ENCODE measurements at regions of chr14 and their contacts with region 1.

Region 1: GRCh38 chr14:80987235-80988032 is 32.0 kb downstream of the TSHR start:
- DNase-seq: peak; percentile 71
- H3K4me3 Mint-ChIP-seq: no peak overlapping the region
- H3K27ac Mint-ChIP-seq: no peak overlapping the region
- H3K4me1 Mint-ChIP-seq: peaks cover 11% of the 10 kb centered on the region
- H3K27me3 Mint-ChIP-seq: peaks cover 5% of the 10 kb centered on the region

Region 2: GRCh38 chr14:80798878-80799277 is 188.6 kb before region 1 on chr14:
- CTCF ChIA-PET with region 1: no interaction called
- POLR2A ChIA-PET with region 1: no interaction called
- DNase-seq: no peak
- H3K4me3 Mint-ChIP-seq: no peak overlapping the region
- H3K27ac Mint-ChIP-seq: no peak overlapping the region
- H3K4me1 Mint-ChIP-seq: no peaks in the 10 kb centered on the region
- H3K27me3 Mint-ChIP-seq: no peaks in the 10 kb centered on the region

Region 3: DNA sequence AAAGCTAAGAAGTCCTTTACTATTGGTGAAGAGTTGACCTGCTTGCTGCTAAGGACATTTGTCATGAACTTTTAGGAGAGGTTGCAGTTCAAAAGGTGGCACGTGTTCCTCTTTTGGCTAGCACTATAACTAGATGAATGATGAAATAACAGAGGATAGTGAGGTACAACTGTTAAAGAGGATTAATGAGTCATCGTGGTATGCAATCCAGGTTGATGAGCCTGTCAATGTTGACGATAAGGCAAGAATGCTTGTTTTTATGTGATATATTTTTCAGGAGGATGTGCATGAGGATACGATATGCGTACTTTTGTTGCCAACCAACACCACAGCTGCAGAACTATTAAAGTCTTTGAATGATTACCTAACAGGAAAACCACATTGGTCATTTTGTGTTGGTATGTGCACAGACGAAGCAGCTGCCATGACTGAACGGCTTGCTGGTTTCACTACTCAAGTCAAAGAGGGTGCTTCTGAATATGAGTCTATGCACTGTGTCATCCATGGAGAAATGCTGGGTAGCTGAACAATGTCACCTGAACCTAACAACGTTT is 56.5 kb before region 1 on chr14:
- CTCF ChIA-PET with region 1: interaction called, 10 read pairs
- POLR2A ChIA-PET with region 1: no interaction called
- DNase-seq: peak; percentile 70
- H3K4me3 Mint-ChIP-seq: peak overlapping the region; percentile 42
- H3K27ac Mint-ChIP-seq: peak overlapping the region; percentile 88
- H3K4me1 Mint-ChIP-seq: peaks cover 64% of the 10 kb centered on the region
- H3K27me3 Mint-ChIP-seq: no peaks in the 10 kb centered on the region

Region 4: GRCh38 chr14:80954687-80955299 is 32.6 kb before region 1 on chr14:
- CTCF ChIA-PET with region 1: interaction called, 188 read pairs
- POLR2A ChIA-PET with region 1: interaction called, 22 read pairs
- DNase-seq: peak; percentile 79
- H3K4me3 Mint-ChIP-seq: peak overlapping the region; percentile 78
- H3K27ac Mint-ChIP-seq: peak overlapping the region; percentile 37
- H3K4me1 Mint-ChIP-seq: peaks cover 51% of the 10 kb centered on the region
- H3K27me3 Mint-ChIP-seq: peaks cover 20% of the 10 kb centered on the region

Region 5: GRCh38 chr14:81164167-81164774 is 176.8 kb after region 1 on chr14:
- CTCF ChIA-PET with region 1: interaction called, 10 read pairs
- POLR2A ChIA-PET with region 1: no interaction called
- DNase-seq: peak; percentile 67
- H3K4me3 Mint-ChIP-seq: no peak overlapping the region
- H3K27ac Mint-ChIP-seq: no peak overlapping the region
- H3K4me1 Mint-ChIP-seq: peaks cover 20% of the 10 kb centered on the region
- H3K27me3 Mint-ChIP-seq: no peaks in the 10 kb centered on the region

Measured in activated CD4-positive, alpha-beta memory T cell treated with anti-CD3 and anti-CD28 coated beads, Interleukin-2, amount 10 ng/mL, durations not matched to agents 7 days and 5 days (primary cell).